Activated naive CD4-positive, alpha-beta T cell treated with anti-CD3 and anti-CD28 coated beads for 36 hours (primary cell): ENCODE measurements at regions of chr9 and their contacts with region 1.

Region 1: GRCh38 chr9:68949271-68950000 is 64.5 kb downstream of the PRKACG start:
- DNase-seq: peak; percentile 64
- H3K4me3 Mint-ChIP-seq: no peak overlapping the region
- H3K27ac Mint-ChIP-seq: peak overlapping the region; percentile 7
- H3K4me1 Mint-ChIP-seq: peaks cover 40% of the 10 kb centered on the region
- H3K27me3 Mint-ChIP-seq: peaks cover 4% of the 10 kb centered on the region

Region 2: GRCh38 chr9:68584189-68585033 is 365.0 kb before region 1 on chr9:
- CTCF ChIA-PET with region 1: interaction called, 11 read pairs
- intact Hi-C with region 1: loop called (anchors 1 kb)
- DNase-seq: peak; percentile 93
- H3K4me3 Mint-ChIP-seq: no peak overlapping the region
- H3K27ac Mint-ChIP-seq: no peak overlapping the region
- H3K4me1 Mint-ChIP-seq: no peaks in the 10 kb centered on the region
- H3K27me3 Mint-ChIP-seq: peaks cover 2% of the 10 kb centered on the region

Region 3: GRCh38 chr9:68704814-68705530 is 244.5 kb before region 1 on chr9 and contains the start of gene PIP5K1B:
- CTCF ChIA-PET with region 1: no interaction called
- intact Hi-C with region 1: loop called (anchors 5 kb)
- DNase-seq: peak; percentile 62
- H3K4me3 Mint-ChIP-seq: peak within 1 kb of the TSS; percentile 82
- H3K27ac Mint-ChIP-seq: no peak within 1 kb of the TSS
- H3K4me1 Mint-ChIP-seq: peaks cover 17% of the 10 kb centered on the region
- H3K27me3 Mint-ChIP-seq: peaks cover 68% of the 10 kb centered on the region
- total RNA-seq, gene PIP5K1B: 0.38 to 0.42 TPM

Region 4: GRCh38 chr9:68844631-68845612 is 104.5 kb before region 1 on chr9:
- CTCF ChIA-PET with region 1: interaction called, 3 read pairs
- intact Hi-C with region 1: loop called (anchors 5 kb)
- DNase-seq: peak; percentile 35
- H3K4me3 Mint-ChIP-seq: no peak overlapping the region
- H3K27ac Mint-ChIP-seq: no peak overlapping the region
- H3K4me1 Mint-ChIP-seq: peaks cover 4% of the 10 kb centered on the region
- H3K27me3 Mint-ChIP-seq: no peaks in the 10 kb centered on the region

Region 5: DNA sequence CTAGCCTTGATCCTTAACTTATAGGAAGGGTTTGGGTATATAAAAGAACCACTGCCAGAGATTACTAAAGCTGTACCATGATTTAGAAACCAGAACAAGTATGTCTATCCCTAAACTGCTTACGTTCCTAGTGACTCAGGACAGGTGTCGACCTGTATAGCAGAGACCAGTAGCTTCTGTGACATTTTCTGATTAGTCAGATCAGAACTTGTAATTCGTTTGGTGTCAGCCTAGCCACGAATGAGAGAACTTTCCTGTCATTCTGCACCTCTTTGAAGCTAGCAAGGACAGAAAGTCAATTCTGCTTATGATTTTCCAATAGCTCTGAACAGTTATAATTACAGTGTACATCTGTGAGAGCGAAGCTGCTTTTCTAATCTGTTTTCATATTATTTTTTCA is 25.0 kb after region 1 on chr9:
- CTCF ChIA-PET with region 1: interaction called, 32 read pairs
- intact Hi-C with region 1: loop called (anchors 1 kb)
- DNase-seq: peak; percentile 66
- H3K4me3 Mint-ChIP-seq: no peak overlapping the region
- H3K27ac Mint-ChIP-seq: peak overlapping the region; percentile 76
- H3K4me1 Mint-ChIP-seq: peaks cover 38% of the 10 kb centered on the region
- H3K27me3 Mint-ChIP-seq: peaks cover 7% of the 10 kb centered on the region

Region 6: GRCh38 chr9:68999393-69000105 is 50.1 kb after region 1 on chr9:
- CTCF ChIA-PET with region 1: interaction called, 28 read pairs
- intact Hi-C with region 1: loop called (anchors 1 kb)
- DNase-seq: peak; percentile 79
- H3K4me3 Mint-ChIP-seq: no peak overlapping the region
- H3K27ac Mint-ChIP-seq: no peak overlapping the region
- H3K4me1 Mint-ChIP-seq: peaks cover 18% of the 10 kb centered on the region
- H3K27me3 Mint-ChIP-seq: no peaks in the 10 kb centered on the region

Region 7: GRCh38 chr9:69174616-69175463 is 225.4 kb after region 1 on chr9:
- CTCF ChIA-PET with region 1: no interaction called
- intact Hi-C with region 1: loop called (anchors 2 kb)
- DNase-seq: peak; percentile 84
- H3K4me3 Mint-ChIP-seq: peak overlapping the region; percentile 77
- H3K27ac Mint-ChIP-seq: peak overlapping the region; percentile 37
- H3K4me1 Mint-ChIP-seq: peaks cover 39% of the 10 kb centered on the region
- H3K27me3 Mint-ChIP-seq: peaks cover 43% of the 10 kb centered on the region